GM12878 (cell line): ENCODE measurements at regions of chr5 and their contacts with region 1.

Region 1: DNA sequence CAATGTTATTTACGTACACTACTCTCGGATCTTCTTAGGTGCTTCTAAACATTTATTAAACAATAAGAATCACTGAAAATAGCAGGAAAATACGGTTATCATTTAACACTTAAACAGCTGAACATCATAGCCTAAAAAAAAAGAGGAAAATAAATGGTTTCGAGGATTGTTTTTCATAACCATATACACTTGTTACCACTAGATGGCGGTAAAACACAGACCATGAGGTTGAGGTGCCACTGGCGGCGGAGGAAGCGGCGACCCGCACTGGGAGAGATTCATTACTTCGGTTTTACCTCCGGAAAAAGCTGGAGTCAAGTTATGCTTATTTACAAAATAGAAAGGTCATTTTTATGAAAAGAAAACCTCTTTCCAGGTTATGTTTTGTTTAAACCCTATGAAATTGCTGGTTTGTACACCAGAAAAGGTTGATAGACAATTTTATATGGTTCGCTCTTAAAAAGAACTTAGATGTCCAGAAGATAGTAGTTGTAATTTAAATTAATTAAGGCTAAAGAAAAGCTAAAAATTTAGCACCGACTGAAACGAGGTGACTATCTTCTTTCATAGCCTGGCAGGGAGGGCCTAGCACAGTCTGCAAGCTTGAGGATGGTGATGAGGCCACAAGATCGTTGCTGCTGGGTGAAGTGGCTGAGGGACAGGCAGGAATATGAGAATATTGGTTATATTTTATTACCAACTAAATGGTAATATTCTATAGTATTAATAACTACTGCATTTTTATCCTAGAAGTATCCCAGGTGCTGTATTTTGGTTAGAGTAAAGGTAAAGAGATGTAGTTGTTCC is 605.7 kb downstream of the RAB3C start:
- DNase-seq: no peak
- ATAC-seq: peak; percentile 83
- H3K4me3 ChIP-seq: no peak overlapping the region
- H3K27ac ChIP-seq: no peak overlapping the region
- H3K4me1 ChIP-seq: no peaks in the 10 kb centered on the region
- H3K27me3 ChIP-seq: no peaks in the 10 kb centered on the region; a peak in 2 of 4 replicates
- CTCF ChIP-seq: peak; percentile 58 to 68 (median 68); a peak in 5 of 6 replicates
- EP300 ChIP-seq: no peak
- POLR2A ChIP-seq: no peak
- RAD21 ChIP-seq: peak; percentile 87

Region 2: DNA sequence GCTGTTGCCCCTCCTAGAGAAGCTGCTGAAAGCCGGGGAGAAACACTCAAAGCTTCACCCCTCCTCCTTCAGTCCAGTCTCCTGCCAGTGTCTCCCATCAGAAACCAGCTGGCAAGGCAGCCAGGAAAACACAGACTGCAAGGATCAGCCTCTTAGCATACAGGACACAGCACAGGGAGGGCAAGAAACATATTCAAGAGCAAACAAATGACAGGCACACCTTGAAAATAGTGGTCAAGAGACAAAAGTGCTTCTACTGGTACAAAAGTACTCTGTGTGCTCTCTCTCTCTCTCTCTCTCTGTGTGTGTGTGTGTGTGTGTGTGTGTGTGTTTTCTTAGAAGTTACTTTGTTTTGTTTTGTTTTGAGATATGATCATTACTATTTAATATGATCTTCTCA is 378.5 kb before region 1 on chr5:
- CTCF ChIA-PET with region 1: no interaction called
- POLR2A ChIA-PET with region 1: no interaction called
- RAD21 ChIA-PET with region 1: no interaction called
- SMC1A ChIA-PET with region 1: no interaction called
- in situ Hi-C with region 1: no loop called
- intact Hi-C with region 1: no loop called
- DNase-seq: no peak
- ATAC-seq: no peak
- H3K4me3 ChIP-seq: no peak overlapping the region
- H3K27ac ChIP-seq: no peak overlapping the region
- H3K4me1 ChIP-seq: no peaks in the 10 kb centered on the region
- H3K27me3 ChIP-seq: no peaks in the 10 kb centered on the region
- CTCF ChIP-seq: no peak
- EP300 ChIP-seq: no peak
- POLR2A ChIP-seq: no peak
- RAD21 ChIP-seq: no peak

Region 3: GRCh38 chr5:59212596-59212995 is 24.0 kb after region 1 on chr5:
- CTCF ChIA-PET with region 1: interaction called, 11 read pairs
- POLR2A ChIA-PET with region 1: no interaction called
- RAD21 ChIA-PET with region 1: interaction called, 3 read pairs
- SMC1A ChIA-PET with region 1: no interaction called
- in situ Hi-C with region 1: no loop called
- intact Hi-C with region 1: no loop called
- DNase-seq: no peak
- ATAC-seq: no peak
- H3K4me3 ChIP-seq: no peak overlapping the region
- H3K27ac ChIP-seq: no peak overlapping the region
- H3K4me1 ChIP-seq: no peaks in the 10 kb centered on the region
- H3K27me3 ChIP-seq: no peaks in the 10 kb centered on the region; a peak in 2 of 4 replicates
- CTCF ChIP-seq: no peak
- EP300 ChIP-seq: no peak
- POLR2A ChIP-seq: no peak
- RAD21 ChIP-seq: no peak

Region 4: DNA sequence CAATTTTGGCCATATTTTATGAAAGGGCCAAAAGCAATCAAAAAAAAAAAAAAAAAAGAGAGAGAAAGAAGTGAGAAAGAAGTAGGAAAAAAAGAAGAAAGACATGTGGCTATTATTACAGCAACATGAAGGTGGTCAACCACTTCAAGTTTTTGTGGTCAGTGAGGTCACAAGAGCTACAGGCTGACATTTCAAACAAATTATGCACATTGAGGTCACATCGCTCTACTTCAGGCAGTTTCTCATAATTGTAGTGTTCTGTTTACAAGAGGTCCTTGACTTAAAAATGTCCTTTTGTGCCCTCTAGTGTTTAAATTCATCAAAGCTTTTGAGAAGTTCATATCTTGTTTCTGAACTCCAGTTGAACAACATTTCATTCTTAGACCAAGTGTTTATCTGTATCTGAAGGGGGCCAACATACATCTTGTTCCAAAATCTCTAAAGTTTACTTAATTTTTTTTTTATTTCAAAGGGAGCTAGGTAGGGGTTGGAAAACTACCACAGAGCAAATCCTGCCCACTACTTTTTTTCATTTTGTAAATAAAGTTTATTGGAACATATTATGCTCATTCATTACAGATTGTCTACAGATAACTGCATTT is 191.8 kb after region 1 on chr5:
- CTCF ChIA-PET with region 1: interaction called, 70 read pairs
- POLR2A ChIA-PET with region 1: no interaction called
- RAD21 ChIA-PET with region 1: interaction called, 27 read pairs
- SMC1A ChIA-PET with region 1: interaction called, 24 read pairs
- in situ Hi-C with region 1: loop called (anchors 5 kb)
- intact Hi-C with region 1: loop called (anchors 1 kb)
- DNase-seq: peak; percentile 76
- ATAC-seq: peak; percentile 98
- H3K4me3 ChIP-seq: no peak overlapping the region
- H3K27ac ChIP-seq: no peak overlapping the region
- H3K4me1 ChIP-seq: no peaks in the 10 kb centered on the region
- H3K27me3 ChIP-seq: no peaks in the 10 kb centered on the region; a peak in 1 of 4 replicates
- CTCF ChIP-seq: peak; percentile 29 to 64 (median 53); a peak in 5 of 6 replicates
- EP300 ChIP-seq: peak; percentile 72 to 82; a peak in 3 of 4 replicates
- POLR2A ChIP-seq: no peak
- RAD21 ChIP-seq: peak; percentile 61

Region 5: DNA sequence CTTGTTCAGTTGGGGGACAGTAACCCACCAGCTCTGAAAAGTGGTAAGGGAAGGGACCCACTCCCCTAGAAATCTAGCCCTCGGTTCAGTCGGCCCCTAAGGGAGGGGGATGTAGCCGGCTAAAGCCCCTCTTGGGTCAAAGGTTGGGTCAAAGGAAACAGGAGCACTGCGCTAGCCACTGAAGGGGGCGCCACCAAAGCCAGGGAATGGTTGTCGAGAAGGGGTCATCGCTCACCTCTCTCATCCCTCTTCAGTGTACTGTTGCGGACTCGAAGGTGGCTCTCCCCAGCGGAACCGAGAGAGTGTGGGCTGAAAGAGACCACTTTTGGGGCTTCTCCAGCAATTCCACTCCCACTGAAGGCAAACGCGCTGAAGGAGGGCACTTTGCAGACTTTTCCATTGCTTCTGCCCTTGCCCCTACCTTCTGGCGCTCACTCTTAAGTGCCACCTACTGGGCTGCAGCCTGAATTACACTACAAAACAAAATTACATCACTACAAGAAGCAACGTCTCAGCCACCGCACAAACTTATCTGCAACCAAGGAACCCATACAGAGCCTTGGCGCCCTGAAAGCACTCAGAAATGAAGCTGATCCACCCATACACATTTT is 308.0 kb after region 1 on chr5:
- CTCF ChIA-PET with region 1: interaction called, 11 read pairs
- POLR2A ChIA-PET with region 1: no interaction called
- RAD21 ChIA-PET with region 1: no interaction called
- SMC1A ChIA-PET with region 1: no interaction called
- in situ Hi-C with region 1: no loop called
- intact Hi-C with region 1: loop called (anchors 5 kb)
- DNase-seq: no peak
- ATAC-seq: peak; percentile 83
- H3K4me3 ChIP-seq: no peak overlapping the region
- H3K27ac ChIP-seq: no peak overlapping the region
- H3K4me1 ChIP-seq: no peaks in the 10 kb centered on the region
- H3K27me3 ChIP-seq: no peaks in the 10 kb centered on the region
- CTCF ChIP-seq: peak; percentile 41 to 58 (median 52)
- EP300 ChIP-seq: no peak
- POLR2A ChIP-seq: no peak
- RAD21 ChIP-seq: no peak

Region 6: DNA sequence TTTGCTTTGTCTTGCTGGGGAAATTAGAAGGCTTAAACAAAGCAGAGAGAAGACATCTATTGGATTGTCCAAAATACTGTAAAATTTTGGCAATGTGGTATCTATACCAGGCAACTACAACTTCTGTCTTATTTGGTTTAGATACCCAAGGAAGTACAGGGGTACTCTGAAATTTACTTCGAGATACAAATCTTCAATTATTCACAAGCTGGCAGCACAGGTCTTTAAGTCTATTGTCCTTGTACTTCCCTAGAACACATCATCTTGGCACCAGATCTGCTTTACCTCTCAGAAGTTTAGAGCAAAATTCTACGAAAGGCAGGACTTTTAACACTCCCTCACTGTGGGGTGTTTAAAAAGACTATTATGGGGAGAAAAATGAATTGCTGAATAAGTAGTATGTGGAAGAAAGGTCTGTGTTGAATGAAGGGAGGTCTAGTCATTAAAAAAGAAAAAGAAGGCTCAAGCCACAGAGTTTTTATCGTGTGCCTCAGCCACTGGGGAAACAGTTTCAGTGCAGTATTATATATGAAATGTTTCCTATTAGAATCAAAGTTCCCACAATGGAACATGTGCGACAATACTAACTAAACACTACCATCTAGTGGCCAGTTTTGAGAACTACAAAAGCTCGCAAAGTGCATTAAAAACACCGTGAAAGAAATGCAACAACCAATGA is 611.2 kb after region 1 on chr5:
- CTCF ChIA-PET with region 1: interaction called, 4 read pairs
- POLR2A ChIA-PET with region 1: no interaction called
- RAD21 ChIA-PET with region 1: interaction called, 4 read pairs
- SMC1A ChIA-PET with region 1: no interaction called
- in situ Hi-C with region 1: loop called (anchors 10 kb)
- intact Hi-C with region 1: loop called (anchors 1 kb)
- DNase-seq: peak; percentile 24
- ATAC-seq: peak; percentile 79
- H3K4me3 ChIP-seq: no peak overlapping the region; the same call in 1 of the 2 replicates
- H3K27ac ChIP-seq: no peak overlapping the region
- H3K4me1 ChIP-seq: peaks cover 11% of the 10 kb centered on the region; the same call in 1 of the 2 replicates
- H3K27me3 ChIP-seq: no peaks in the 10 kb centered on the region
- CTCF ChIP-seq: peak; percentile 41 to 71 (median 58); a peak in 5 of 6 replicates
- EP300 ChIP-seq: no peak
- POLR2A ChIP-seq: no peak
- RAD21 ChIP-seq: peak; percentile 82